Sigmoid colon (tissue), 7 donors: ENCODE measurements at regions of chr17 and their contacts with region 1.

Region 1: DNA sequence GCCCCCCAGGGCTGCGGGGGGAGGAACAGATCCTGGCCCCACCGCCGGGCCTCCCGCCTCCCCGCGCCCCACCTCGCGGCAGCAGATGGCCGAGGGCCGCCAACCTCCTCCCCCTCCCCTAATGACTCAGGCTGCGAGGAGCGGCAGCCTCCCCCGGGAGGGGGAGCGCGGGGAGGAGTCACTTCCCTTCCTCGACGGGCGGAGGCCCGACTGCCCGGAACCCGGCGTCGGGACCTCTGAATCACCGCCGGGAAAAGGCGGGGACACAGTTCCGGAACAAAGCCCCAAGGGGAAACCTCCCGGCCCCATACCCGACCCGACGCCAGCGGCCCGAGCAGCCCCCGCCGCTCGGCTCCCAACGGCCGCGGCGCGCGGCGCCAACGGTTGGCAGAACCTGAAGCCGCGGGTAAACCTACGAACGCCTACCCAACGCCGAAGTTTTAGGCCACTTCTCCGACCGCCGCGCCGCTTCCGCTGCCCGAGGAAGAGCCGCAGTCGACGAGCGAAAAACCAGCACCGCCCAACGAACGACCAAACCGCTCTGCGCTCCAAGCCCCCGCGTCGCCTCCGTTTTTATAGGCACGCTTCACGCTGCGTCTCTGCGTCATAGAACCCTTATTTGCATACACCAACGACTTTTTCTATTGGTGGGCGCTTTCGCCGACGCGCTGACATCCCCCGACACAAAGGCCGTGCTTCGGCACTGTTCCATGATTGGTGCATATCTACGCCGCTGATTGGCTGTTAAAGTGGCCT is 5.2 kb upstream of the UNK start:
- DNase-seq: peak; percentile 99
- H3K4me3 ChIP-seq: peak overlapping the region; percentile 78 to 97 (median 86)
- H3K27ac ChIP-seq: peak overlapping the region; percentile 94 to 99 (median 98)
- H3K4me1 ChIP-seq: peaks cover 0 to 41% (median 32%) of the 10 kb centered on the region in 4 donors
- H3K27me3 ChIP-seq: no peaks in the 10 kb centered on the region
- CTCF ChIP-seq: no peak
- EP300 ChIP-seq: peak in 2 of 4 donors; percentile 70 to 88
- POLR2A ChIP-seq: peak; percentile 100

Region 2: GRCh38 chr17:75896415-75897159 is 117.2 kb after region 1 on chr17 and contains the start of gene TRIM65:
- intact Hi-C with region 1: loop called (anchors 5 kb)
- DNase-seq: peak; percentile 94
- H3K4me3 ChIP-seq: peak within 1 kb of the TSS; percentile 73 to 95 (median 83)
- H3K27ac ChIP-seq: peak within 1 kb of the TSS; percentile 95 to 98 (median 96)
- H3K4me1 ChIP-seq: peaks cover 0 to 39% (median 34%) of the 10 kb centered on the region in 4 donors
- H3K27me3 ChIP-seq: no peaks in the 10 kb centered on the region
- CTCF ChIP-seq: no peak
- EP300 ChIP-seq: no peak
- POLR2A ChIP-seq: peak; percentile 41 to 61
- total RNA-seq, gene TRIM65: 22.4 to 27.5 (median 25.1) TPM